Lower lobe of right lung (tissue), 2 donors: ENCODE measurements at regions of chr12 and their contacts with region 1.

Region 1: DNA sequence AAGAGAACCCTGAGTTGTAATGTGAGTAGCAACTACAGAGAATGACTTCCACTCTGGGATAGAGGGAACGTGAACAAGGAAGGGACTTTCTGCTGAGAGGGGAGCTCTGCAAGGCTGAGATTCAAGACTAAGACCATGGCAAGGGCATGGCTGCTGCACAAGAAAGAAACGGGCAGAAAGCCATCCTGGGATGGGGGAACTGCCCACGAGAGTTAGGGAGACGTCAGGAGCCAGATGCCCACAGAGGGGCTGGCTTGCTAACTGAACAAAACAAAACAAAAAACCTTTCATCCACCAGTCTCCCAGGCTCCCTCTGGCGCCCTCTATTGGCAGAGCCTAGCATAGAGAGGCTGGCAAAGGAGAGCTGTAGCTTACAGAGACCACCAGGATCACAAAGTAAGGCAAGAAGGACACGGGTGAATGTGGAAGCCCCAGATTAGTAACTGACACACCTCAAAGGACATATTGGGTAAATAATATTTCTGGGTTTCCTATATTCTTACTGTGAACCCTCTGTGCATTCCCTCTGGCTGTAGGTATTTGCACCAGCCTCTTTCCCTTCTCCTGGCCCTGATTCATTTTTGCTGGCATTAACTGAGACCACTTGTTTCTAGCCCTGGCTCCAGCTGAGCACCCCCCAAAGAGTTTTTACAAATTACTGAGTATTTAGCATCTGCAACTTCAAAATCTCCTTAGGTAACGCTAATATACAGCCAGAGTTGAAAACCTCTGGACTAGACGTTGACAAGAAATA is 338.3 kb downstream of the EMP1 start:
- DNase-seq: peak; percentile 72
- ATAC-seq: peak; percentile 49 to 63
- H3K4me3 ChIP-seq: peak overlapping the region; percentile 29
- H3K27ac ChIP-seq: no peak overlapping the region
- H3K4me1 ChIP-seq: no peaks in the 10 kb centered on the region
- H3K27me3 ChIP-seq: no peaks in the 10 kb centered on the region
- CTCF ChIP-seq: peak; percentile 82

Region 2: GRCh38 chr12:12837025-12837872 is 697.6 kb before region 1 on chr12:
- intact Hi-C with region 1: no loop called
- DNase-seq: no peak
- ATAC-seq: peak; percentile 70 to 82
- H3K4me3 ChIP-seq: peak overlapping the region; percentile 21
- H3K27ac ChIP-seq: peak overlapping the region; percentile 56
- H3K4me1 ChIP-seq: no peaks in the 10 kb centered on the region
- H3K27me3 ChIP-seq: no peaks in the 10 kb centered on the region
- CTCF ChIP-seq: peak; percentile 40

Region 3: DNA sequence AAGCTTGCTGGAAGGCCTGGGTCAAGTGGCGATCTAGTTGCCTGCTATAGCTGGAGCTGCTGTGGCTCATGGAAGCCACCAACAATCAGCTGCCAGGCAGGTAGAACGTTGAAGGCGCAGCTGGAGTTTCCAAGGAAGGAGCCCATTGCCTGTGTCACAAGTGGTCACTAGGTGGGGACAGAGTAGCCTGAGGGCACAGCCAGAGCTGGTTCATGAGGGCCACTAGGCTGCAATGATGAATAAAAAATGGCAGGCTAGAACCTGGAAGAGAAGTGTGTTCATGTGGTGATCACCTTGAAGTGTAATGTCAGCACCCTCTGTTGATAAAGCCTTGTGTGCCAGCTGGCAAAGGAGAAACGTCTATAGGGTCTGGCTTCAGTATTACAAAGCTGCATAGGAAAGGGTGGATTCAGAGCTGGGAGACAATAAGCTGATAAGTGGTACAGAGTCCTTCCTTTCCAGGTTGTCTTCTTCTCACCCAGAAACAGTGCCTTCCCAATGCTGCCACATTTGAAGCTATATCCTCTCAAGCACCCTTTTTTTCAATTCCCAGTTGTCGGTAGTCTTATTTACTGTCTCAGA is 172.5 kb before region 1 on chr12:
- intact Hi-C with region 1: loop called (anchors 10 kb)
- DNase-seq: peak; percentile 54
- ATAC-seq: peak; percentile 93 to 94
- H3K4me3 ChIP-seq: no peak overlapping the region
- H3K27ac ChIP-seq: no peak overlapping the region
- H3K4me1 ChIP-seq: no peaks in the 10 kb centered on the region
- H3K27me3 ChIP-seq: peaks cover 8% of the 10 kb centered on the region
- CTCF ChIP-seq: peak; percentile 87

Region 4: GRCh38 chr12:13390381-13390861 is 144.4 kb before region 1 on chr12:
- intact Hi-C with region 1: no loop called
- DNase-seq: peak; percentile 91
- ATAC-seq: peak; percentile 94 to 99
- H3K4me3 ChIP-seq: no peak overlapping the region
- H3K27ac ChIP-seq: no peak overlapping the region
- H3K4me1 ChIP-seq: peaks cover 7% of the 10 kb centered on the region
- H3K27me3 ChIP-seq: no peaks in the 10 kb centered on the region
- CTCF ChIP-seq: no peak